Activated CD4-positive, alpha-beta memory T cell treated with anti-CD3 and anti-CD28 coated beads for 36 hours (primary cell): ENCODE measurements at regions of chr5 and their contacts with region 1.

Region 1: GRCh38 chr5:149367249-149367971 is 9.6 kb downstream of the PCYOX1L start:
- DNase-seq: peak; percentile 64
- H3K4me3 Mint-ChIP-seq: no peak overlapping the region
- H3K27ac Mint-ChIP-seq: no peak overlapping the region
- H3K4me1 Mint-ChIP-seq: peaks cover 2% of the 10 kb centered on the region
- H3K27me3 Mint-ChIP-seq: no peaks in the 10 kb centered on the region

Region 2: DNA sequence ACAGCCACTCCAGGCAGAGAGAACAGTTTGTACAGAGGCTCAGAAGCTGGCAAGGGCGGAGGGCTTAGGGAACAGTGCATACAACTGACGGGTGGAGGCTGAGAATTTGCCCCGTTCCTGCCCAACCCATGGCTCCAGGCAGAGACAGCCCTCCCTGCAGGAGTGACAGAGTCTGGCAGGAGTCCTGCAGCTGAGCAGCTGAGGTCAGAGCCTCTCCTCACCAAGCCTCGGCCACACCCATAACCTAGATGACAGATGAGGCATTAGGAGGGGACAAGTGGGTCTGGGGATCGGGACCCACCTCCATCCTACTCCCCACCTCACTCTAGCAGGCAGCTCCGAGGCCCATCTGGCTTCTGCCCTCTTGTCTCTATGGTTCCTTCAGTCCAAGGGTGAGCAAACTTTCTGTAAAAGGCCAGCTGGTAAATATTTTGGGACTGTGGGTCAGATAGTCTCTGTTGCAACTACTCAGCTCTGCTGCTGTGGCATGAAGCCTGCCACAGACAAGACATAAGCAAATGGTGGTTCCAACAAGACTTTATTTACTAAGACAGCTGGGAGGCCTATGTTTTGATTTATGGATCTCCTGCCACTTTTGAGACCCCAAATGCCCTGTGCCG is 388.2 kb before region 1 on chr5:
- CTCF ChIA-PET with region 1: no interaction called
- POLR2A ChIA-PET with region 1: no interaction called
- intact Hi-C with region 1: no loop called
- DNase-seq: no peak
- H3K4me3 Mint-ChIP-seq: no peak overlapping the region
- H3K27ac Mint-ChIP-seq: no peak overlapping the region
- H3K4me1 Mint-ChIP-seq: no peaks in the 10 kb centered on the region
- H3K27me3 Mint-ChIP-seq: peaks cover 3% of the 10 kb centered on the region

Region 3: DNA sequence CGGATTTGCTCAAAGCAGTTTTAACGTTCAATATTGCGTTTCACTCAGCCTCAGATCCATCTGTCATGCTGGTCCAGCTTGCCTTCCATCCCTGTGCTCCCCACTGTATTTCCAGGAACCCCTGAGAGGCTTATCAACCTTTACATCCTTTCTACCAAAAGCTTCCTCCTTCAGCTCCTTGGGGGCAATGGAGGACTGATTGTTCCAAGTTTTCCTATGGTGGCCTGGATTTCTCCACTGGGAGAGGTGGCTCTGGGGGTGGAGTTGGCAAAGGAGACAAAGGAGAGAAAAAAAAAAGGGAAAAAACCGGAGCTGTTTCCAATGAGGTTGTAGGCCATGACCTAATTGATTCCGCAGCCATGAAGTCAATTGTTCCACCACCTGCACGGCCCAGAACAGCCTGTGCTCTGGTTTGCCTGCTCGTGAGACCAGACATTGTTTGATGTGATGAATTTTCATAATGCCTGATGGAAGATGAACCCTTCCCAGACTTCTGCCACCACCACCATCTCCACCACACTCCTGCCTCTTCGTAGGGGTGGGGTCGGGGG is 172.0 kb before region 1 on chr5:
- CTCF ChIA-PET with region 1: no interaction called
- POLR2A ChIA-PET with region 1: no interaction called
- intact Hi-C with region 1: no loop called
- DNase-seq: no peak
- H3K4me3 Mint-ChIP-seq: no peak overlapping the region
- H3K27ac Mint-ChIP-seq: no peak overlapping the region
- H3K4me1 Mint-ChIP-seq: no peaks in the 10 kb centered on the region
- H3K27me3 Mint-ChIP-seq: no peaks in the 10 kb centered on the region

Region 4: DNA sequence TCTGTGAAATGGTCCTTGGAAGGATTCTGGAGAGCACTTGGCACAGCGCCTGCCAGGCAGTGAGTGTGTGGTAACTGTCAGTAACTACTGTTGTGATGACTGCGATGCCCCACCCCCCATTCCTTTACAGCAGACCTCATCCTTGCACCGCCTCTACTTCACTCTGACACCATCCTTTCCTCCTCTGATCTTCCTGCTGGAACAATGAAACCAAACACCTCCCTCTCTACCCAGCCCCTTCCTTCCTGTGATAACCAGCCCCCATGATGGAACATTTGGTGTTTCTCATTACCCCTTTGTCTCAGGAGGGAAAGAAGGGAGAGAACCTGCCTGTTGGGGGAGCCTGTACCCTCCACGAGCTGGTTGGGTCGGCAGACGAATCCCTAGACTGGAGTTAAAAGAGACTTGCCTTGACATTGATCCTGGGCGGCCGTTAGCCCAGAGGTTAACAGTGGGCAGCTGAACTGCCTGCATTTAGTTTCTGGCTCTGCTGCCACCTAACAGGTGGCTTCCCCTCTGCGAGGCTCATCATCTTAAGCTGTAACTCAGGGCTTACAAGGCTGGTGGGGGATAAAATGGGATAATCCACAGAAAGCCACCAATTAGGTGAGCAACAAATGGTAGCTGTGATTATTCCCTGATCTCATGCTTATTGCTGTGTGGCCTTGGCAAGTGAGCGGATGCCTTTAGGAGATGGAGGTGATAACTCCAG is 56.3 kb before region 1 on chr5:
- CTCF ChIA-PET with region 1: interaction called, 289 read pairs
- POLR2A ChIA-PET with region 1: no interaction called
- intact Hi-C with region 1: no loop called
- DNase-seq: no peak
- H3K4me3 Mint-ChIP-seq: no peak overlapping the region
- H3K27ac Mint-ChIP-seq: no peak overlapping the region
- H3K4me1 Mint-ChIP-seq: no peaks in the 10 kb centered on the region
- H3K27me3 Mint-ChIP-seq: no peaks in the 10 kb centered on the region

Region 5: GRCh38 chr5:149325166-149325735 is 42.2 kb before region 1 on chr5:
- CTCF ChIA-PET with region 1: interaction called, 289 read pairs
- POLR2A ChIA-PET with region 1: no interaction called
- intact Hi-C with region 1: no loop called
- DNase-seq: no peak
- H3K4me3 Mint-ChIP-seq: no peak overlapping the region
- H3K27ac Mint-ChIP-seq: no peak overlapping the region
- H3K4me1 Mint-ChIP-seq: no peaks in the 10 kb centered on the region
- H3K27me3 Mint-ChIP-seq: no peaks in the 10 kb centered on the region

Region 6: GRCh38 chr5:149345147-149345875 is 22.1 kb before region 1 on chr5 and contains the start of gene GRPEL2:
- CTCF ChIA-PET with region 1: interaction called, 29 read pairs
- POLR2A ChIA-PET with region 1: interaction called, 3 read pairs
- intact Hi-C with region 1: no loop called
- DNase-seq: peak; percentile 97
- H3K4me3 Mint-ChIP-seq: peak within 1 kb of the TSS; percentile 97
- H3K27ac Mint-ChIP-seq: peak within 1 kb of the TSS; percentile 93
- H3K4me1 Mint-ChIP-seq: peaks cover 46% of the 10 kb centered on the region
- H3K27me3 Mint-ChIP-seq: no peaks in the 10 kb centered on the region
- total RNA-seq, gene GRPEL2: 32.9 to 37.2 TPM

Region 7: DNA sequence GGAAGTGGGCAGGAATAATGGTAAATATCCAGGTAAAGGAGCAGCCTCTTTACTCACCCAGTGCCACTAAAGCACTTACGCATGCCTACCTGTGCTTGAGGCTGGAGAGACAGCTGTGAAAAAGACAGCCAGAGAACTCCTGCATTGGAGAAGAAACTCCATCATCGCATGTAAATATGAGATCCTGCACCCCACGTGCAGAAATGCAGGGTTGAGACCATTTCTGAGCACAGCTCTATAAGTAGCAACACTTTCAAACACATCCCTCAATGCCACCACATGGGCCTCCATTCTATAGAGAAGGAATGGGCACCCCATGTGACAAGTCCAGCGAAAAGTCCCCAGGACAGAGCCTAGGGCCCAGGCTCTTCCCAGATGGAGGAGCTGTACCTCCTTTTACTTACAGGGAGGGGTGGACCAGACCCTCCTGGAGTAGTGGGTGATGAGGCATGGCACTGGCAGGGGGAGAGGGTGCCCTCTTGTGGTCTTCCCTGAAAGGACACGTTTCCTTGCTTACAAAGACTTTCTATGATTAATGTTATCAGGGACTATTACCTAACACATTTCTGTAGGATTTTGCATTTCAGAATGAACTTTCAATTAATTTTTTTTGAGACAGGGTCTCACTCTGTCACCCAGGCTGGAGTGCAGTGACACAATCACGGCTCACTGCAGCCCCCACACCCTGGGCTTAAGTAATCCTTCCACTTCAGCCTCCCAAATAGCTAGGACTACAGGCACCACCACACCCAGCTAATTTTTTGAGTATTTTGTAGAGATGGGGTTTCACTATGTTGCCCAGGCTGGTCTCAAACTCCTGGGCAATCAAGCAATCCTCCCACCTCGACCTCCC is 67.0 kb after region 1 on chr5:
- CTCF ChIA-PET with region 1: interaction called, 22 read pairs
- POLR2A ChIA-PET with region 1: no interaction called
- intact Hi-C with region 1: no loop called
- DNase-seq: peak; percentile 66
- H3K4me3 Mint-ChIP-seq: no peak overlapping the region
- H3K27ac Mint-ChIP-seq: no peak overlapping the region
- H3K4me1 Mint-ChIP-seq: peaks cover 12% of the 10 kb centered on the region
- H3K27me3 Mint-ChIP-seq: no peaks in the 10 kb centered on the region

Region 8: GRCh38 chr5:149500922-149501582 is 133.6 kb after region 1 on chr5:
- CTCF ChIA-PET with region 1: no interaction called
- POLR2A ChIA-PET with region 1: no interaction called
- intact Hi-C with region 1: no loop called
- DNase-seq: no peak
- H3K4me3 Mint-ChIP-seq: no peak overlapping the region
- H3K27ac Mint-ChIP-seq: no peak overlapping the region
- H3K4me1 Mint-ChIP-seq: no peaks in the 10 kb centered on the region
- H3K27me3 Mint-ChIP-seq: no peaks in the 10 kb centered on the region

Region 9: GRCh38 chr5:149567226-149567625 is 199.8 kb after region 1 on chr5:
- CTCF ChIA-PET with region 1: interaction called, 18 read pairs
- POLR2A ChIA-PET with region 1: no interaction called
- intact Hi-C with region 1: loop called (anchors 5 kb)
- DNase-seq: no peak
- H3K4me3 Mint-ChIP-seq: no peak overlapping the region
- H3K27ac Mint-ChIP-seq: no peak overlapping the region
- H3K4me1 Mint-ChIP-seq: peaks cover 13% of the 10 kb centered on the region
- H3K27me3 Mint-ChIP-seq: no peaks in the 10 kb centered on the region